ENCODE measurements at regions of chr19 and their contacts with region 1.

Region 1: DNA sequence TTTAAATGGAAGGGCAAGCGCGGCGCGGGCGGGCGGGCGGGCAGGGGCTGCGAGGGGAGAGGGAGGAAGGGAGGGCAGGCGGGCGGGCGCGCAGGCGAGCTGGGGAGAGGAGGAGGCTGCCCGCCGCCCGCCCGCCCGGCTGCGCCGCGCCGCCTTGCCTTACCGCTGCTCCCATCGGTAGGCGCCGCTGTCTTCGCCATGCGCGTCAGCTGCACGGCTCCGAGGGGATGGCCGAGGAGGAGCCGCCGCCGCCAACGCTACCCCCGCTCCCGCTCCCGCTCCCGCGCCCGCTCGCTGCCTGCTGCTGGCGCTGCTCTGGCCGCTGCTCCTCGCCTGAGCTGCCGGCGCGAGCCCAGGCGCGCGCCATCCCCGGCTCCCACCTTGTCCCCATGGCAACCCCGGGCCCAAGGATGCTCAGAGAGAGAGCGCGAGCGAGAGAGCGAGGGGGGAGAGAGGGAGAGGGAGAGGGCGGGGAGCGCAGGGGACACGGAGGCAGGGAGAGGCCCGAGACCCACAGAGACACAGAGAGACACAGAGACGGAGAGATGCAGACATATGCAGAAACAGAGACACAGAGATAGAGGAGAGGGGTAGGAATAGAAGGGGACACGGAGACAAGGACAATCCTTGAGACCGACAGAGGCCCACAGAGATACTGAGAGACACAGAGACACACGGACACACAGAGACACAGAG is 40.3 kb downstream of the DEDD2 start:
- DNase-seq: peak; percentile 80
- ATAC-seq: peak; percentile 94
- H3K4me3 Mint-ChIP-seq: no peak overlapping the region
- H3K27ac Mint-ChIP-seq: no peak overlapping the region
- H3K4me1 Mint-ChIP-seq: peaks cover 9% of the 10 kb centered on the region
- H3K27me3 Mint-ChIP-seq: peaks cover 31% of the 10 kb centered on the region

Region 2: GRCh38 chr19:42140125-42140754 is 36.9 kb before region 1 on chr19:
- CTCF ChIA-PET with region 1: interaction called, 79 read pairs
- DNase-seq: peak; percentile 66
- ATAC-seq: peak; percentile 71
- H3K4me3 Mint-ChIP-seq: no peak overlapping the region
- H3K27ac Mint-ChIP-seq: no peak overlapping the region
- H3K4me1 Mint-ChIP-seq: peaks cover 10% of the 10 kb centered on the region
- H3K27me3 Mint-ChIP-seq: no peaks in the 10 kb centered on the region

Region 3: DNA sequence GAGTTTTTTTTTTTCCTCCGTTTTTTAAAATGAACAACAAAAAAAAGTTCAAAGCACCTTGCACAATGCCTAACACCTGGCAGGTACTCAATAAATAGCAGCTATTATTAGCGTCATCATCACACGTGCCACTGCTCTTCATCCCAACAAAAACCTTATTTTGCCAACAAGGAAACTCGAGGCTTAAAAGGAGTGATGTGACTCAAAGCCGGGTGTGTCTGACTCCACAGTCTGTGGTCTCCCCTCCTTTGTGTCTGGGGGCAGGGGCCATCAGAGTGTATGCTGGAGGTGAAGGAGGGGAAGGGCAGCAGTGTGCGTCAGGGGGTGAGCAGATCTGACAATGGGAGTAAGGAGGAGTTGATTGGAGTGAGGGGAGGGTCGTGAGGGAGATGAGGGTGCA is 10.8 kb before region 1 on chr19:
- CTCF ChIA-PET with region 1: interaction called, 12 read pairs
- DNase-seq: no peak
- ATAC-seq: no peak
- H3K4me3 Mint-ChIP-seq: no peak overlapping the region
- H3K27ac Mint-ChIP-seq: no peak overlapping the region
- H3K4me1 Mint-ChIP-seq: peaks cover 9% of the 10 kb centered on the region
- H3K27me3 Mint-ChIP-seq: peaks cover 5% of the 10 kb centered on the region

Region 4: GRCh38 chr19:42229855-42230351 is 52.8 kb after region 1 on chr19:
- CTCF ChIA-PET with region 1: no interaction called
- DNase-seq: no peak
- ATAC-seq: no peak
- H3K4me3 Mint-ChIP-seq: no peak overlapping the region
- H3K27ac Mint-ChIP-seq: no peak overlapping the region
- H3K4me1 Mint-ChIP-seq: peaks cover 7% of the 10 kb centered on the region
- H3K27me3 Mint-ChIP-seq: no peaks in the 10 kb centered on the region

Region 5: DNA sequence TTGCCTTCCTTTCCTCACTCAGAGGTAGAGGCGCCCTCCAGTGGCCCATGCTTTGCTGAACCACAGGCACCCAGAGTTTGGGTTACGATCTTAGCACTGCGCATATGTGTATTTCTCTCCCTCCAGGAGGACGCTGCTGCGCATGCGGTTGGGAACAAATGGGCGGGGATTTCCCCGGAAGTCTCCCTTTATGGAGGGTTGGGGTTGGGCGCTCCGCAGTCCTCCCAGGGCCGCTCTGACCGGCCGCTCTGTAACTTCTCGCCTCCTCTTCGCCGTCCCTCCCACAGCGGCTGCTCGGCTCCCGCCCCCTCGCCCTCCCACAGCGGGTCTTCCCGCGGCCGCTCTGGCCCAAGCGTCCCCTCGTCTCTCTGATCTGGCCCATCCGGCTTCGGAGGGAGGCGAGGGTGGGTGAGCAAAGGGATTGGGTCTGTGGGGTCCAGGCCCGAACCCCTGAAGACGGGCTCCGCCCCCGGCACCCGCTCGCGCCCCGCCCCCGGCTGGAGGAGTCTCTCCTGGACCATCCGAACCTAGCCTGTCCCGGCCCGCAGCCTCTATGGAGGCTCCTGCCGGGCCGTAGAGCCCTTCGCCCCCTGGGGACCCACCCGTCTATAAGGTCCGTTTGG is 148.2 kb after region 1 on chr19 and contains the start of gene MEGF8:
- CTCF ChIA-PET with region 1: no interaction called
- DNase-seq: peak; percentile 100
- ATAC-seq: peak; percentile 94
- H3K4me3 Mint-ChIP-seq: peak within 1 kb of the TSS; percentile 79
- H3K27ac Mint-ChIP-seq: peak within 1 kb of the TSS; percentile 75
- H3K4me1 Mint-ChIP-seq: peaks cover 17% of the 10 kb centered on the region
- H3K27me3 Mint-ChIP-seq: peaks cover 26% of the 10 kb centered on the region
- total RNA-seq, gene MEGF8: 6.5 TPM

Measured in activated CD8-positive, alpha-beta memory T cell treated with anti-CD3 and anti-CD28 coated beads, Interleukin-2, amount 10 ng/mL, durations not matched to agents 7 days and 5 days (primary cell).